ENCODE measurements at regions of chr11 and their contacts with region 1.

Region 1: GRCh38 chr11:117817368-117818040 is 7.0 kb downstream of the FXYD2 start:
- DNase-seq: peak; percentile 89 to 93
- ATAC-seq: peak; percentile 87
- H3K4me3 ChIP-seq: no peak overlapping the region
- H3K27ac ChIP-seq: no peak overlapping the region
- H3K4me1 ChIP-seq: no peaks in the 10 kb centered on the region
- H3K27me3 ChIP-seq: no peaks in the 10 kb centered on the region

Region 2: GRCh38 chr11:117426269-117426685 is 391.2 kb before region 1 on chr11:
- intact Hi-C with region 1: loop called (anchors 5 kb)
- DNase-seq: peak; percentile 72 to 88
- ATAC-seq: peak; percentile 54
- H3K4me3 ChIP-seq: no peak overlapping the region
- H3K27ac ChIP-seq: no peak overlapping the region
- H3K4me1 ChIP-seq: no peaks in the 10 kb centered on the region
- H3K27me3 ChIP-seq: no peaks in the 10 kb centered on the region

Measured in aorta (tissue), 5 donors.